Esophagus muscularis mucosa (tissue), 4 donors: ENCODE measurements at regions of chr19 and their contacts with region 1.

Region 1: DNA sequence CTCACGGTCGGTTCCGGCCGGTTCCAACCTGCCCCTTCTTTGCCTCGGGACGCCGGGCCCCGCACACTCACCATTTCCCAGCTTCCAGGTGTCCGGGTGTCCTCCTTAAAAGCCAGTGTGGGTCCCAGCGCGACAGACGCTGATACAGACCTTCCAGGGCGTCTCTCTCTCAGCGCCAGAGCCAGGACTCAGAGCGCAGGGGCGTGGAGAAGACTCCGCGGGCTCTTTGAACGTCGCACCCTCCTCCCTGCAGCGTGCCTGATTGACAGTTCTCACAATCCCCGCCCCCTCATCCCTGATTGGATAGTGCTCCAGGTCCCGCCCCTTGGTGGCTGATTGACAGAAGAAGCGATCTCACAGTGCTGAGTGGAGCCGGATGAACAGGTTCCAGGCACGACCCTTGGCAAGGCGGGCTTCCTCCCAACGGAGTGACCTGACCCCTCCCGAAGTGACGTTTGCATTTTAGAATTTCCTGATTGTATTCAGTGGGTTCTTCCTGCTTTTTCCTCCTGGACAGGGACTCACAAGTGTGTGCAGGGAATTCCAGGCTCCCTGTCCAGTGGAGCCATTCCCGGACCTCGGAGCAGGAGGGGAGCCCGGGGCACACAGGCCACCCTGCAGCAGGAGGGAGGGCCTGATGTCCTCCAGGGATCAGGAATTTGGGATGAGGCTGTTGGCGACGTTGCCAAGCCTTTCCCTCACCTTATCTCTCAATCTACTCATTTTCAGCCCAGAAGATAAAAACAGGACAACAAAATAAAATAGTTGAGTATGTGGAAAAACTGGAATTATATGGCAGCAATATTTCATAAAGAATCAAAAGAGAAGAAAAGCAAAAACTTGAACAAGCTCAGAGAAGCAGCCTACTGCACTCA is at the start of gene ZNF823:
- DNase-seq: peak; percentile 100
- H3K4me3 ChIP-seq: peak within 1 kb of the TSS; percentile 87 to 99 (median 98)
- H3K27ac ChIP-seq: peak within 1 kb of the TSS; percentile 89 to 96 (median 92)
- H3K4me1 ChIP-seq: peaks cover 10 to 27% (median 23%) of the 10 kb centered on the region in 4 donors
- H3K27me3 ChIP-seq: no peaks in the 10 kb centered on the region
- CTCF ChIP-seq: no peak
- EP300 ChIP-seq: no peak
- POLR2A ChIP-seq: peak; percentile 20
- total RNA-seq, gene ZNF823: 3.1 to 6.7 (median 5.0) TPM

Region 2: GRCh38 chr19:11663181-11663591 is 75.8 kb before region 1 on chr19:
- intact Hi-C with region 1: no loop called
- DNase-seq: no peak
- H3K4me3 ChIP-seq: no peak overlapping the region
- H3K27ac ChIP-seq: no peak overlapping the region
- H3K4me1 ChIP-seq: no peaks in the 10 kb centered on the region
- H3K27me3 ChIP-seq: no peaks in the 10 kb centered on the region
- CTCF ChIP-seq: no peak
- EP300 ChIP-seq: no peak
- POLR2A ChIP-seq: no peak

Region 3: GRCh38 chr19:11694533-11695439 is 44.2 kb before region 1 on chr19:
- intact Hi-C with region 1: loop called (anchors 5 kb)
- DNase-seq: peak; percentile 99
- H3K4me3 ChIP-seq: peak overlapping the region; percentile 62 to 82 (median 72)
- H3K27ac ChIP-seq: peak overlapping the region; percentile 59 to 79 (median 71)
- H3K4me1 ChIP-seq: peaks cover 7 to 18% (median 15%) of the 10 kb centered on the region in 4 donors
- H3K27me3 ChIP-seq: no peaks in the 10 kb centered on the region
- CTCF ChIP-seq: no peak
- EP300 ChIP-seq: no peak
- POLR2A ChIP-seq: no peak

Region 4: DNA sequence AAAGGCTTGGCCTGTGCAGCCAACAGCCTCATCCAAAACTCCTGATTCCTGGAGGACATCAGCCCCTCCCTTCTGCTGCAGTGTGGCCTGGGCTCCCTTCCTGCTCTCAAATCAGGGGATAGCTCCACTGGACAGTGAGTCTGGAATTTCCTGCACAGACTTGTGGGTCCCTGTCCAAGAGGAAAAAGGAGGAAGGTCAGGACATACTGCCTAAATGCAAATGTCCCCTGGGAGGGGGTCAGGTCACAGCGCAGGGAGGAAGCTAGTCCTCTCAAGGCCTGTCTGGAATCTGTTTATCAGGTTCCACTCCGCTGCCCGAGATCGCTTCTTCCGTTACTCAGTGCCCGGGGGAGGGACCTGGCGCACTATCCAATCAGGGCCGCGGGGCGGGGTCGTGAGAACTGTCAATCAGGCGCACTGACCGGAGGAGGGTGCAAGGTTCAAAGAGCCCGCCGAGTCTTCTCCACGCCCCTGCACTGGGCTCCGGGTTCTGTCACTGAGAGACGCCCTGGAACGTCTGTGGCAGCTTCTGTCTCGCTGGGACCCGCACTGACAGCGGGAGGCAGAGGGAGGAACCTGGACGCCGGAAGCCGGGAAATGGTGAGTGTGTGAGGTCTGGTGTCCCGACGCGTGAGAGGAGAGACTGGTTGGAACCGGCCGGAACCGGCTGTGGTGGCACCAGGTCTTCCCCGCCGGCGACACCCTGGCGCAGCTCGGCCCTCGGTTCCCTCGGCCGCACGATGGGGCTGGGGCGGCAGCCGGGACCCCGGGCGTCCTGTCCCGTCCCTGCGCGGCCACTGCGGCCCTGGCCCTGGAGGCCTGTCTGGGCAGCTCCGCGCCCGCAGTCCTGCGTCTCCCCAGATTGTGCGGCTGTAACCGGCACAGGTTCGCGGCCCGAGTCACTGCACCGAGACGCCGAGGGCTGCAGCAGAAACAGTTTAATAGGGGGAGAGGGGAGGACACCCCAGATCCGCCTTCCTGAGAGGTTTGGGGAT is 27.9 kb after region 1 on chr19 and contains the start of gene ZNF441:
- intact Hi-C with region 1: loop called (anchors 2 kb)
- DNase-seq: peak; percentile 100
- H3K4me3 ChIP-seq: peak within 1 kb of the TSS; percentile 73 to 78 (median 74)
- H3K27ac ChIP-seq: peak within 1 kb of the TSS; percentile 89 to 96 (median 92)
- H3K4me1 ChIP-seq: peaks cover 18 to 24% (median 20%) of the 10 kb centered on the region in 4 donors
- H3K27me3 ChIP-seq: no peaks in the 10 kb centered on the region
- CTCF ChIP-seq: no peak
- EP300 ChIP-seq: no peak
- POLR2A ChIP-seq: peak; percentile 33
- total RNA-seq, gene ZNF441: 5.6 to 7.9 (median 6.5) TPM

Region 5: DNA sequence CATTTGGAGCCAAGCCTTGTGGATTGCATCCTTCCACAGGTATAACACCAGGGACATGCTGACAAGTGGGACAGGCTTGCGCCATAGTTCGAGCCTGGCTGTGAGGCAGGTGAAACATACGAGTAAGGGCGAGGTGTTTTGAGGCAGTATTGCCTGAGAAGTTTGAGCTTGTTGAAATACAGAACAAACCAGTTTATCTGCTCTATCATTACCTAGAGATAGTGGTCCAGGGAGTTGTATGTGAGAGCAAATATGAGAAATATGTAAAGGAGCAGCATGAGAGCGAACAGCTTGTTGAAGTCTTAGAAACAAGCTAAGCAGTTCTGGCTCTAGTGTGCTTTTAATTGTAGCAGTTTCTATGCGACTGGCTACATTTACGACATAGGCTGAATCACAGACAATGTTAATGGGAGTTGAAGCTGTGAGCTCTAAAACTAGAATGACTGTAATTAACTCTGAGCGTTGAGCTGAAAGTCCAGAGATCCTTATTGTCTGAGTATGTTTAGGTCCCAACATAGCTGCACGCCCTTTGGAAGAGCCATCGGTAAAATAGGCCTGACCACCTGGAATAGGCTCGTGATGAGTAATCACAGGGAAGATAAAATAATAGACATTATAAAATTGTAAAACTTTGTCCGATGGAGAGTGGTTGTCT is 117.7 kb after region 1 on chr19:
- intact Hi-C with region 1: no loop called
- DNase-seq: no peak
- H3K4me3 ChIP-seq: no peak overlapping the region
- H3K27ac ChIP-seq: no peak overlapping the region
- H3K4me1 ChIP-seq: no peaks in the 10 kb centered on the region
- H3K27me3 ChIP-seq: no peaks in the 10 kb centered on the region
- CTCF ChIP-seq: no peak
- EP300 ChIP-seq: no peak
- POLR2A ChIP-seq: no peak